ENCODE measurements at regions of chr1 and their contacts with region 1.

Region 1: DNA sequence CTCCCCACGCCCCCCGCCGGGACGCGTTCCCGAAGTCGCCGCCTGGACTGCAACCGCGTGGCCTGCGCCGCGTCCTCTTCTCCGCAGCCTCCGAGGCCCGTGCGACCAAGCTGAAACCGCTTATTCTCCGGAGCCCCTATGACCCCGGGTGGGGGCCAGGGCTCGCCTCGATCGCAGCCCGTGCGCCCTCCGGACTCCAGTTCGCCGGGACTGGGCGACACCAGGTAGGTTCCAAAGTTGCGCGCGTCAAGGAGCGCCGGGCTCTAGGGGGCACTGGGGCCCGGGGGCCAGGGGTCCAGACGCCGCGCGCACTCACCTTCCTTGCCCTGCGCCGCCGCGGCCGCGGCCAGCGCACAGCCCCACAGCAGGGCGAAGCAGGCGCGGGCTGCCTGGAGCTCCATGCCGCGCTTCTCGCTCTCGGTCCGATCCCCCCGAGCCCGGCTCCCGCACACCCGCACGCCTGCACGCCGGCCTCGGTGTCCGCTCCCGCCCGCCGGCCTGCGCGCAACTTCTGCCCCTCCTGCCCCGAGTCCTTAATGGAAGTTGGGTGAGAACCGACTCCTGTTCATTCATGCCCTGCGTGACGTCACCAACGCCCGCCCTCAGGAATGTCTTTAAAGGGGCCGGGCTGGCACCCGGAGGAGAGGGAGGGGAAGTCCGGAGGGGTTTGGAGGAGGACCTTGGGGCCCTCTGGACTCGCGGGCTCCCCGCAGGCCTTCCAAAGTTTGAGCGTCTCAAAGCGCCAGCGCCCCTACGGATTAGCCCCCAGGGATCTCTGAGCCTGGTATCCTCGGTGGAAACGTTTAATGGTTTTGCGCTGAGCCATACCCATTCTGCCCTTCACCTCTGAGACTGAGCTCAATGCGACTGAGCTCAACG is at the start of gene EPHA2:
- DNase-seq: peak; percentile 81

Region 2: GRCh38 chr1:16219968-16220500 is 64.3 kb after region 1 on chr1:
- CTCF ChIA-PET with region 1: interaction called, 10 read pairs
- POLR2A ChIA-PET with region 1: no interaction called
- DNase-seq: no peak